ENCODE measurements at regions of chr18 and their contacts with region 1.

Region 1: DNA sequence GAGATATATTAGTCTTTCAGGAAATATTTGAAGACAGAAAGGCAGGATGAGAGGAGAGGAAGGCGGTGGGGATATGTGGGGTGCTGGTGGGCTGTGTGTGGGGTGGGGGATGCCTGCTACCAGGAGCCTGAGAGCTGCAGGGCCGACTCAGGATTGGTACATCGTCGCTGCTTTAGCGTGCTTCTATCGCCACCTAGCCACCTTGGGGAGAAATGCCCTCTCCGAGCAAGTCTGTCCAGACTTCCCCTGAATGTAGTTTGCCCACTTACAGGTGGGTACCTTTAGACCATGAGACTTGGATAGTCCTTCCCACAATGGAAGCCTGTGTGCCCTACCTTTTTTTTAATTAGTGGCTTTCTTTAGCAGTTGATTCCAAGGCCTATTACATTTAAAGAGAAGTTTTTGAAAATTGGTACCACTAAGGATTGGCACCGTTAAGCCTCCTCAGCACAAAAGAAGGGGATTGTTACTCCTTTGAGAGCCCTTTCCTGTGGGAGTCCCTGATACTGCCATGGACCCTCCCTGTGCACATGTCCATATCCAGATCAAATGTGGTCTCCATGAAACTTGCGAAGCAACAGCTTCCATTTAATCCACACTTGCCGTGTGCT is 114.1 kb upstream of the NDUFV2 start:
- DNase-seq: peak; percentile 56
- ATAC-seq: peak; percentile 80

Region 2: DNA sequence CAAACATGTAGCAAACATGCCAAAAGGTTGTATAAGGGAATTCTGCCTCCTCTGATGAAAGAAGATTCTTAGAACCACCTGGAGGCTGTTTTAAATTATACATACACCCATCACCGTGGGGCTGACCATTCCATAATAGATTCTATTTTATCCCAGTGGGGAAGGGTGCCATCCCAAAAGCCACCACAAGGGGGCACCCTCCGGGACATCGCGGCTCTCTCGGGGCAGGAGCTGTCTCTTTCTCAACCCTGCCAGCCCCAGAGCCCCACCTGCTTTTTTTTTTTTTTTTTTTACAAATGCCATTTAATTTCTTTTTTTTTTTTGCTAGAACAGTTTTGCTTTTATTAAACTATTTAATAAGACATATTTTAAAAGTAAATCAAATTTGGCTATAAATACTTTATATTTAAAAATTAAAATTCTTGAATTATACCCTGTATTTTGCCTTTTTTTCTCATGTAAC is 291.6 kb before region 1 on chr18:
- intact Hi-C with region 1: loop called (anchors 2 kb)
- DNase-seq: peak; percentile 86
- ATAC-seq: peak; percentile 96

Region 3: GRCh38 chr18:10579079-10579867 is 1590.9 kb after region 1 on chr18:
- intact Hi-C with region 1: no loop called
- DNase-seq: no peak
- ATAC-seq: no peak

Measured in Right ventricle myocardium superior (tissue), 1 donor.